ENCODE measurements at regions of chr4 and their contacts with region 1.

Region 1: DNA sequence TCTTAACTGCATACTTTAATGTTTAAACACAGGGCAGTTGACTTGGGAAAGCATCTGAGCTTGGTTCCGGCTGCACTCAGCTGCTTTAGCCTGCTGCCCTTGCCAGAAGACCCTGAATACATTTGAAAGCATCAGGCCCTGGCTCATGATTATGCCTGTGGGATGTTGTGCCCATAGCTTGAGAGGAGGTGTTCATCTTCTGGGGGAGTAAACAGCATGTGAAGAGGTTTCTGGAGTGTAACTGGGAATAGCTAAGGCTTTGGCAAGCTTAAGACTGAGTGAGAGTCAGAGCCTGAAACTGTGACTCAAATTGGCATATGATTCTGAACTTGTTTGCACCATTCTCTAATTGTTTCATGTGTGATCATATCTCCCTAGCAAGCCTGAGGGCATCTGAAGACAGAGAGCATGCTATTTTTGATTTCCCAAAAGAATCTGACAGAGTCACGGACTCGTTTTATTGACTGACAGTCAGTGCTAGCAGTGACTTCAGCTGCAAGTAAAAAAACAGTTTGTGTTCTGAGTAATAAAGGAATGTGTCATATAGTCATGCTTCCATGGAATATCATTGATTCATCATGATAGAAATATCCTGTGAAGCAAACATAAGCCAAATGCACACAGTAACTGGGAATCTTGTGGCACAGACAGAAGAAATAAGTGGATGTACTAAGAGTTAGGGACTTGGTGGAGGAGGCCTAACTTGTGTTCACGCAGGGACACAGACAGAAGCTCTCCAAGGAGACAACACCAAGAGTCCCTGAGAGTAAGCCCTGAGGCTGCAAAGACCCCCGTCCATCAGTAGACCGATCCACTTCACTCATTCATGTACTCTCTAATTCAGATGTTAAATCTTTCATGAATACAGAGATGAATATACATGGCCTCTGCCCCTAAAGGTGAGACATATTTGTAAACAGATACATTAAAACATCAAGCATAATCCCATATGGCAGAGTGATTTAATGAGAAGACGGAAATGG is 100.7 kb downstream of the SYNPO2 start:
- DNase-seq: peak; percentile 54 to 59
- ATAC-seq: peak; percentile 65 to 71
- H3K4me3 ChIP-seq: peak overlapping the region in 1 of 4 donors; percentile 12
- H3K27ac ChIP-seq: peak overlapping the region; percentile 87 to 99 (median 91)
- H3K4me1 ChIP-seq: peaks cover 80 to 84% of the 10 kb centered on the region in 2 donors
- H3K27me3 ChIP-seq: no peaks in the 10 kb centered on the region
- CTCF ChIP-seq: no peak
- POLR2A ChIP-seq: peak; percentile 70 to 80

Region 2: GRCh38 chr4:119025916-119026661 is 36.7 kb after region 1 on chr4:
- in situ Hi-C with region 1: loop called in 3 of 4 experiments (anchors 5 kb)
- intact Hi-C with region 1: loop called (anchors 2 kb)
- DNase-seq: peak; percentile 74 to 87
- ATAC-seq: peak; percentile 64 to 66
- H3K4me3 ChIP-seq: peak overlapping the region; percentile 55 to 74 (median 67)
- H3K27ac ChIP-seq: peak overlapping the region; percentile 94 to 98 (median 96)
- H3K4me1 ChIP-seq: peaks cover 19 to 33% of the 10 kb centered on the region in 2 donors
- H3K27me3 ChIP-seq: no peaks in the 10 kb centered on the region
- CTCF ChIP-seq: no peak
- POLR2A ChIP-seq: peak; percentile 68 to 81

Region 3: DNA sequence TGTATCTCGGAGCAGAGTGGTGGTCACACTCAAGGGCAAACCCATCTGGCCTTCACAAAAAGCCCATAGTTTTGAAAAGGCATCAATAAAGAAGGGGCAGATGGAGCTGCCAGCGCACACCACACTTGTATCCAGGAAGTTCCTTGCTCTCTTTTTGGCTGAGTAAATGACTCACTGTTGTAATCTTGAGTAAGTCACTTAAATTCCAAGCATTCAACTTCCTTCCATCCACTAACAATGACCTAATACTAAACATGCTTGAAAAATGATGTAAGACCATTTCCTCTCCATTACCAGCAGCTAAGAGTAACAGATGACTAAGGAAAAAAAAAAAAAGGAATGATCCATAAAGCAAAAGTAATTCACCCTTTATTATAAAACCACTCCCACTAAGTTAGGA is 113.9 kb after region 1 on chr4:
- in situ Hi-C with region 1: no loop called
- intact Hi-C with region 1: loop called (anchors 5 kb)
- DNase-seq: peak in 1 of 2 donors; percentile 45
- ATAC-seq: peak; percentile 69 to 75
- H3K4me3 ChIP-seq: no peak overlapping the region
- H3K27ac ChIP-seq: peak overlapping the region; percentile 49 to 73 (median 69)
- H3K4me1 ChIP-seq: peaks cover 46 to 54% of the 10 kb centered on the region in 2 donors
- H3K27me3 ChIP-seq: no peaks in the 10 kb centered on the region
- CTCF ChIP-seq: no peak
- POLR2A ChIP-seq: no peak